Transverse colon (tissue), 4 donors: ENCODE measurements at regions of chr1 and their contacts with region 1.

Region 1: DNA sequence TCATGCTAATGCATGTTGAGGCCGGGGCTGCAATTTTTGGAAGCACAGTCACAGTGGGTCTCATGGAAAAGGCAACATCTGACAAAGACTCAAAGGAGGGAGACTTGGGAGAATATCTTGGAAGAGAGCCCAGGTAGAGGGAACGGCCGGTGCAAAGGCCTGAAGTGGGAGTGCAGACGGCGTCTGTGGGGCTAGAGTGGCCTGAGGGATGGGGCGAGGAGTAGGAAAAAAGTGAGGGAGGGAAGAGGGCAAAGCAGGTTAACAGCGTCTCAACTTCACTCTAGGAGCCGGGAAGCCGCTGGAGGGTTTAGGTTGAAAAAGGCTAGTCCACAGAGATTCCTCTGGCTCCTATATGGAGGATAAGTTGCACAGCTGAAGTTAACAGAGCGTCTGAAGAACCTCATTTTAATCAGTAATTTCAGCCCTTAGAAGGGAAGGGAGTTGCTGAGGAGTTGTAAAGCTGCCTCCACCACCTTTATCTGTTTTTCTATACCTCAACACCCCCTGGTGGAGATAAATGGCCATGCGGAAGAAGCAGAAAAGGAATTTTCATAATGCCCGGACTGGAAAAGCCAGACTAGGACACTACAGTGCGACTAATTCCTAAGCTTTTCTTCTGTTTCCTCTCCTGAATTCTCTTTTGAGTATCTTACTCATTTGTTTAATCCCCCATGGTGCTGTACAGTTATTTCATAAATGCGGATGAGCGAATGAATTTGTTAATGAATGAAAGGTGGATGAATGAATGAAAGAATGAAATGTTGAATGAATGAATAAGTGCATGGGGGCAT is 78.7 kb upstream of the ZNF281 start:
- DNase-seq: peak; percentile 53
- H3K4me3 ChIP-seq: no peak overlapping the region
- H3K27ac ChIP-seq: no peak overlapping the region
- H3K4me1 ChIP-seq: peaks cover 0 to 4% (median 4%) of the 10 kb centered on the region in 4 donors
- H3K27me3 ChIP-seq: no peaks in the 10 kb centered on the region
- CTCF ChIP-seq: peak; percentile 80 to 84 (median 82)
- EP300 ChIP-seq: no peak
- POLR2A ChIP-seq: no peak

Region 2: DNA sequence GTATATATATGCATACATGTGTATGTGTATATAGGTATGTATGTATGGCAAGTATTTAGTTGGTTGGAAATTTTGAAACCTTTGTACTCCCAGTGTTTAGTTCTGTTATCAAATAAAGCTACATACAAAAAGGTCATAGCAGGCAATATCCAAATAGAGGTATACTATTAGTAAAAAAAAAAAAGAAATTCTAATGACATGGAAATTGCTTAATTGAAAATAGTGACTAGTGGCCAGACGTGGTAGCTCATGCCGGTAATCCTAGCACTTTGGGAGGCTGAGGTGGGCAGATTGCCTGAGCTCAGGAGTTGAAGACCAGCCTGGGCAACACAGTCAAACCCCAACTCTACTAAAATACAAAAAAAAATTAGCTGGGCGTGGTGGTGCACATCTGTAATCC is 812.6 kb before region 1 on chr1:
- in situ Hi-C with region 1: loop called in 3 of 4 experiments (anchors 10 to 25 kb)
- intact Hi-C with region 1: no loop called
- DNase-seq: no peak
- H3K4me3 ChIP-seq: no peak overlapping the region
- H3K27ac ChIP-seq: no peak overlapping the region
- H3K4me1 ChIP-seq: no peaks in the 10 kb centered on the region
- H3K27me3 ChIP-seq: no peaks in the 10 kb centered on the region
- CTCF ChIP-seq: peak in 1 of 5 experiments; percentile 6
- EP300 ChIP-seq: no peak
- POLR2A ChIP-seq: no peak

Region 3: GRCh38 chr1:199684686-199685273 is 803.8 kb before region 1 on chr1:
- in situ Hi-C with region 1: loop called in 3 of 4 experiments (anchors 10 to 25 kb)
- intact Hi-C with region 1: no loop called
- DNase-seq: peak; percentile 16
- H3K4me3 ChIP-seq: no peak overlapping the region
- H3K27ac ChIP-seq: no peak overlapping the region
- H3K4me1 ChIP-seq: peaks cover 0 to 5% (median 0%) of the 10 kb centered on the region in 4 donors
- H3K27me3 ChIP-seq: no peaks in the 10 kb centered on the region
- CTCF ChIP-seq: peak; percentile 57 to 79 (median 71)
- EP300 ChIP-seq: no peak
- POLR2A ChIP-seq: no peak

Region 4: DNA sequence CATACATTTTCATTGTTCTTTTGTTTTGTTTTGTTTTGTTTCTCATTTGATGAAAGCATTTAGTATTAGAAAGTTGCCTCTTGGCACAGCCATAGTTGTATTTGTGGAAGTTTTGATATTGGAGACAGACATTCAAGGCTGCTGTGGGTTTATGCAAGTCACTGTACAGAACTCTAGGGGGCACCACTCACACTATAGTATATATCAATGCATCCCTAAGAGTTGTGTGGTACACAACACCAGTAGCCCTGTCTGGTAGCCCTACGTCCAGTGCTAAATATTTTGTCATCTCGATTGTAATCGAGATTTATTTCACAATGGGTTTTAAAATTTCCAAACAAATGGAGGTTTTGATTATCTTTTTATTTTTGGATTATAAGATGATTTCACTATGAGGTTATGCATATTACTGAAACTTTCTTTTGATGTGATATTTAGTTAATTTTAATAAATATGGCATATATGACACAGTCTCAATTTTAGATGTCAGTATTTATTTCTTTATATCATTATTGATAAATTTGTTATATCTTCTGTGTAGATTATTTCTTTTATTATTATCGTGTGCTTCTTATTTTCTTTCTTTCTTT is 348.8 kb before region 1 on chr1:
- in situ Hi-C with region 1: loop called in 2 of 4 experiments (anchors 25 kb)
- intact Hi-C with region 1: no loop called
- DNase-seq: no peak
- H3K4me3 ChIP-seq: no peak overlapping the region
- H3K27ac ChIP-seq: no peak overlapping the region
- H3K4me1 ChIP-seq: no peaks in the 10 kb centered on the region
- H3K27me3 ChIP-seq: no peaks in the 10 kb centered on the region
- CTCF ChIP-seq: peak; percentile 40 to 43 (median 42)
- EP300 ChIP-seq: no peak
- POLR2A ChIP-seq: no peak

Region 5: DNA sequence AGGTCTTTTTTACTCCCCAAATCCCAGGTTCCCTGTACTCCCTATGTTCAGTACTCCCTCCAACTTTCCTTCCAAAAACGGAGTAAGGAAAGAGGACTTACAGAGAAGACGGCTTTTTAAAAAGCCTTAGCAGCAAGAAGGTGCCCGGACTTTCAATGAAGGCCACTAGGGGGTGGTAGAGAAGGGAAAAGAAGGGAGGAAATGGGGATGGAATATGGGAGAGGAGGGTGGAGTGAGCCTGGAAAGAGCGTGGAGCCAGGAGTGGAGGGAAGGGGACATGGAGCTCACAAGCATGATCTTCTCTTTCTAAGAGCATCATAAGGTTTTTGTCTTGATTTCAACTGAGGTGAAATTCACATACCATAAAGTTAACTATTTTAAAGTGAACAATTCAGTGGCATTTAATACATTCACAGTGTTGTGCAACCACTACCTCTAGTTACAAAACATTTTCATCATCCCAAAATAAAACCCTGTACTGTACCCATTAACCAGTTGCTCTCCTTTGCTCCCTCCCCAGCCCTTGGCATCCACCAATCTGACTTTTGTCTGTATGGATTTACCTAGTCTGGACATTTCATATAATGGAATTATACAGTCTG is 208.7 kb before region 1 on chr1:
- in situ Hi-C with region 1: loop called (anchors 10 to 25 kb)
- intact Hi-C with region 1: no loop called
- DNase-seq: peak; percentile 66
- H3K4me3 ChIP-seq: no peak overlapping the region
- H3K27ac ChIP-seq: no peak overlapping the region
- H3K4me1 ChIP-seq: peaks cover 0 to 8% (median 0%) of the 10 kb centered on the region in 4 donors
- H3K27me3 ChIP-seq: no peaks in the 10 kb centered on the region
- CTCF ChIP-seq: peak; percentile 67 to 83 (median 73)
- EP300 ChIP-seq: no peak
- POLR2A ChIP-seq: no peak

Region 6: GRCh38 chr1:200602632-200603031 is 114.1 kb after region 1 on chr1:
- in situ Hi-C with region 1: no loop called
- intact Hi-C with region 1: no loop called
- DNase-seq: no peak
- H3K4me3 ChIP-seq: no peak overlapping the region
- H3K27ac ChIP-seq: no peak overlapping the region
- H3K4me1 ChIP-seq: no peaks in the 10 kb centered on the region
- H3K27me3 ChIP-seq: no peaks in the 10 kb centered on the region
- CTCF ChIP-seq: no peak
- EP300 ChIP-seq: no peak
- POLR2A ChIP-seq: no peak

Region 7: GRCh38 chr1:200620273-200621131 is 131.9 kb after region 1 on chr1 and contains the start of gene KIF14:
- in situ Hi-C with region 1: no loop called
- intact Hi-C with region 1: no loop called
- DNase-seq: peak; percentile 95
- H3K4me3 ChIP-seq: peak within 1 kb of the TSS; percentile 46 to 68 (median 56)
- H3K27ac ChIP-seq: peak within 1 kb of the TSS; percentile 45 to 74 (median 68)
- H3K4me1 ChIP-seq: peaks cover 0 to 22% (median 16%) of the 10 kb centered on the region in 4 donors
- H3K27me3 ChIP-seq: no peaks in the 10 kb centered on the region
- CTCF ChIP-seq: no peak
- EP300 ChIP-seq: no peak
- POLR2A ChIP-seq: no peak
- total RNA-seq, gene KIF14: 0.40 to 0.68 (median 0.64) TPM in 3 of 4 donors, not detected in the other